Activated CD8-positive, alpha-beta T cell treated with anti-CD3 and anti-CD28 coated beads for 36 hours (primary cell): ENCODE measurements at regions of chr17 and their contacts with region 1.

Region 1: DNA sequence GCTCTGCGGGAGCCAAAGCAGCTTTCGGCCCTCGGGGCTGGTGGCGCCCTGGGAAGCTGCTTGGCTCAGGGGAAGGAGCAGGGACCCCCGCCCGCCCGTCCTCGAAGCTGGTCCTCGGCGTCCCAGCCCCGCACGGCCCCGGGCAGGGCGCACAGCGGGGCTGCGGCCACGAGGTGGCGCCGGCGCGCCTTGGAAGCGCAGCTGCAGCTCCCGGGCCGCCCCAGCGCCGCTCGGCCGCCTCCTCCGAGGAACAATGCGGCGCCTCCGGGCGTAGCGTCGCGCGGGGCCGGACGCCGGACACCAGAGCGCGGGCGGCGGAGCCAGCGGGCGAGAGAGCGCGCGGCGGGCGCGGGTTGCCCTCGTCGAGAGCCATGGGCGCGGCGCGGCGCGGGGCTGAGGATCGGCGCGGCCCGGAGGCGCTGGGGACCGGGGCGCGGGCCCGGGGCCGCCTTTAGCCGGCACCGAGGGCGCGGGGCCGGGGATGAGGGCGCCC is at the start of gene MGAT5B:
- DNase-seq: peak; percentile 78
- ATAC-seq: peak; percentile 93
- H3K4me3 Mint-ChIP-seq: peak within 1 kb of the TSS; percentile 45
- H3K27ac Mint-ChIP-seq: no peak within 1 kb of the TSS
- H3K4me1 Mint-ChIP-seq: peaks cover 8% of the 10 kb centered on the region
- H3K27me3 Mint-ChIP-seq: peaks cover 12% of the 10 kb centered on the region
- CTCF ChIP-seq: peak; percentile 82
- total RNA-seq, gene MGAT5B: not detected

Region 2: DNA sequence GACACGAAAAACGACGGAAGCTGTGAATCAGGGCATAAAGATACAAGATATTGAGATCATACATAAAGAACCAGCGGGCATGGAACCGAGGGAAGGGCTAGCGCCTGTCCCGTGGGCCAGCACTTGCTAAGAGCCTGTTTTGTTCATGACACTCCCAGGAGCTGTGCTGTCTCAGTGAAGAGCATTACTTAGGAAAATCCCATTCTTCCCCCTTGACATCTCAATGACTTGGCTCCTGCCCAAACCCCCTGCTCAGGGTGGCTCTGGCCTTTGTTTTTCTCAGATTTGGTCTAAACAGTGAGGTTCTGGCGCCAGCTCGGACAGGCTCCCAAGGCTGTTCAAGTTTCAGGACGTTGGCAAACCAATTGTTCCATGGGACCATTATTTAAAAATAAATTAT is 193.4 kb after region 1 on chr17:
- CTCF ChIA-PET with region 1: interaction called, 51 read pairs
- POLR2A ChIA-PET with region 1: no interaction called
- intact Hi-C with region 1: loop called (anchors 5 kb)
- DNase-seq: no peak
- ATAC-seq: no peak
- H3K4me3 Mint-ChIP-seq: no peak overlapping the region
- H3K27ac Mint-ChIP-seq: no peak overlapping the region
- H3K4me1 Mint-ChIP-seq: no peaks in the 10 kb centered on the region
- H3K27me3 Mint-ChIP-seq: peaks cover 9% of the 10 kb centered on the region
- CTCF ChIP-seq: no peak

Region 3: DNA sequence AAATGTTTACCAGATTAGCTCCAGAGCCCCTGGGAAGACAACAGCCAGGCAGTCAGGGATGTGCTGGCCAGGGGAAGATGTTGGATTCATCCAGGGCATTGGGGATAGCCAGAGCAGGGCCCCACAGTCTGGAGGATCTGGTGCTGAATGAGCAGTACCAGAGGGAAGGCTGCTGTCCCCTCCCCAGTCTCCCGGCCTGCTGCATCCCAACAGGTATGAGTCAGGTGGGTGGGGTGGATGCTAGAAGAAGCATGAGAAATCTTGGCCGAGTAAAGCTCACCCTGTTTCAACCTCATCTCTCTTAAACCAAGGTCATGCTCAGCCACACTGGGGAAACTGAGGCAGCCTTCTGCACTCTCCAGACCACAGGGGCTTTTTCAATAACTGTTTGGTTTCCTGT is 200.7 kb after region 1 on chr17:
- CTCF ChIA-PET with region 1: interaction called, 20 read pairs
- POLR2A ChIA-PET with region 1: no interaction called
- intact Hi-C with region 1: loop called (anchors 5 kb)
- DNase-seq: no peak
- ATAC-seq: no peak
- H3K4me3 Mint-ChIP-seq: no peak overlapping the region
- H3K27ac Mint-ChIP-seq: no peak overlapping the region
- H3K4me1 Mint-ChIP-seq: no peaks in the 10 kb centered on the region
- H3K27me3 Mint-ChIP-seq: peaks cover 22% of the 10 kb centered on the region
- CTCF ChIP-seq: no peak